ENCODE measurements at regions of chr1 and their contacts with region 1.

Region 1: GRCh38 chr1:54052934-54053744 is at the starts of genes TCEANC2 and TMEM59:
- DNase-seq: peak; percentile 95
- H3K4me3 ChIP-seq: peak within 1 kb of the TSS; percentile 98
- CTCF ChIP-seq: no peak

Region 2: DNA sequence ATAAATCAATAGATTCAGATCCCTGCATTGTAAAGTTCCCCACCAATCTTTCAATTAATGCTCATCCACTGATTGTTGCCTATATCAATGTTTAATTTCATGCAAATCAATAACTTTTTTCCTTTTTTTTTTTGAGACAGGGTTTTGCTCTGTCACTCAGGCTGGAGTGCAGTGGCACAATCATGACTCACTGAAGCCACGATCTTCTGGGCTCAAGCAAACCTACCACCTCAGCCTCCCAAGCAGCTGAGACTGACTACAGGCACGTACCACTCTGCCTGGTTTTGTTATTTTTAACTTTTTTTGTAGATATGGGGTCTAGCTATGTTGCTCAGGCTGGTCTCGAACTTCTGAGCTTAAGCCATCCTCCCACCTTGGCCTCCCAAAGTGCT is 133.5 kb before region 1 on chr1:
- CTCF ChIA-PET with region 1: no interaction called
- POLR2A ChIA-PET with region 1: no interaction called
- DNase-seq: no peak
- H3K4me3 ChIP-seq: no peak overlapping the region
- CTCF ChIP-seq: no peak

Region 3: GRCh38 chr1:54041806-54042205 is 11.3 kb before region 1 on chr1:
- CTCF ChIA-PET with region 1: interaction called, 18 read pairs
- POLR2A ChIA-PET with region 1: interaction called, 3 read pairs
- DNase-seq: no peak
- H3K4me3 ChIP-seq: no peak overlapping the region
- CTCF ChIP-seq: no peak

Region 4: GRCh38 chr1:54376430-54377039 is 323.4 kb after region 1 on chr1:
- CTCF ChIA-PET with region 1: no interaction called
- POLR2A ChIA-PET with region 1: no interaction called
- DNase-seq: no peak
- H3K4me3 ChIP-seq: no peak overlapping the region
- CTCF ChIP-seq: no peak